GM12878 (cell line): ENCODE measurements at regions of chr3 and their contacts with region 1.

Region 1: GRCh38 chr3:136396916-136397315 is 146.8 kb downstream of the PCCB start:
- DNase-seq: no peak
- ATAC-seq: no peak
- H3K4me3 ChIP-seq: no peak overlapping the region
- H3K27ac ChIP-seq: no peak overlapping the region
- H3K4me1 ChIP-seq: no peaks in the 10 kb centered on the region
- H3K27me3 ChIP-seq: no peaks in the 10 kb centered on the region
- CTCF ChIP-seq: no peak
- EP300 ChIP-seq: no peak
- POLR2A ChIP-seq: no peak
- RAD21 ChIP-seq: no peak

Region 2: GRCh38 chr3:136250226-136250902 is 146.6 kb before region 1 on chr3 and contains the start of gene PCCB:
- CTCF ChIA-PET with region 1: interaction called, 13 read pairs
- POLR2A ChIA-PET with region 1: no interaction called
- RAD21 ChIA-PET with region 1: interaction called, 3 read pairs
- SMC1A ChIA-PET with region 1: no interaction called
- in situ Hi-C with region 1: no loop called
- intact Hi-C with region 1: no loop called
- DNase-seq: peak; percentile 76
- ATAC-seq: peak; percentile 99
- H3K4me3 ChIP-seq: peak within 1 kb of the TSS; percentile 66
- H3K27ac ChIP-seq: peak within 1 kb of the TSS; percentile 71
- H3K4me1 ChIP-seq: peaks cover 15% of the 10 kb centered on the region
- H3K27me3 ChIP-seq: no peaks in the 10 kb centered on the region
- CTCF ChIP-seq: peak; percentile 62 to 75 (median 75)
- EP300 ChIP-seq: 0 out of 4 replicates have a peak, but pooled peaks of 1 of the 2 experiments have one; percentile 25
- POLR2A ChIP-seq: peak; percentile 96
- RAD21 ChIP-seq: peak; percentile 56
- polyA plus RNA-seq, gene PCCB: 67.2 to 73.3 TPM

Region 3: DNA sequence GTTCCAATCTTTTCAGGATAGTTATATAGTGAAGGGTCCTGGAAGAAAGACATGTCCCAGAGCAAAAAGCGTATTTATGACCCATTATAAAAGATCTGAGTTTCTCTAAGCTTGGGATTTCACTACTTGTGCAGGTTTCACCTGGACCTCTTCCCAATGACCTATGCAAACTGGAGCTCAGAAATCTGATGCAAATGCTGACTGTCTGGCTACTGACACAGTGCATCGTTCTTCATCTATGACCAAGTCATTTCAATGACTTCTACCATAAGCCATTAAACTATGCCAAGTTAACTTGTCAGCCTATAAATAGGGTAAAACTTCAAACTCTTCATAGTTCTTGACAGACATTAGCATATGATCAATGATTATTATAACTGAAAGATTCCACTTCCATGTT is 344.1 kb after region 1 on chr3:
- CTCF ChIA-PET with region 1: interaction called, 16 read pairs
- POLR2A ChIA-PET with region 1: no interaction called
- RAD21 ChIA-PET with region 1: interaction called, 4 read pairs
- SMC1A ChIA-PET with region 1: interaction called, 10 read pairs
- in situ Hi-C with region 1: no loop called
- intact Hi-C with region 1: no loop called
- DNase-seq: no peak
- ATAC-seq: no peak; the same call in 2 of the 3 replicates
- H3K4me3 ChIP-seq: no peak overlapping the region
- H3K27ac ChIP-seq: no peak overlapping the region
- H3K4me1 ChIP-seq: no peaks in the 10 kb centered on the region; the same call in 1 of the 2 replicates
- H3K27me3 ChIP-seq: no peaks in the 10 kb centered on the region
- CTCF ChIP-seq: no peak
- EP300 ChIP-seq: no peak
- POLR2A ChIP-seq: no peak
- RAD21 ChIP-seq: no peak